ENCODE measurements at regions of chr3 and their contacts with region 1.

Region 1: GRCh38 chr3:105545051-105545450 is 178.3 kb downstream of the ALCAM start:
- DNase-seq: no peak
- ATAC-seq: no peak
- H3K4me3 ChIP-seq: no peak overlapping the region
- H3K27ac ChIP-seq: no peak overlapping the region
- H3K4me1 ChIP-seq: no peaks in the 10 kb centered on the region
- H3K27me3 ChIP-seq: no peaks in the 10 kb centered on the region
- CTCF ChIP-seq: no peak

Region 2: DNA sequence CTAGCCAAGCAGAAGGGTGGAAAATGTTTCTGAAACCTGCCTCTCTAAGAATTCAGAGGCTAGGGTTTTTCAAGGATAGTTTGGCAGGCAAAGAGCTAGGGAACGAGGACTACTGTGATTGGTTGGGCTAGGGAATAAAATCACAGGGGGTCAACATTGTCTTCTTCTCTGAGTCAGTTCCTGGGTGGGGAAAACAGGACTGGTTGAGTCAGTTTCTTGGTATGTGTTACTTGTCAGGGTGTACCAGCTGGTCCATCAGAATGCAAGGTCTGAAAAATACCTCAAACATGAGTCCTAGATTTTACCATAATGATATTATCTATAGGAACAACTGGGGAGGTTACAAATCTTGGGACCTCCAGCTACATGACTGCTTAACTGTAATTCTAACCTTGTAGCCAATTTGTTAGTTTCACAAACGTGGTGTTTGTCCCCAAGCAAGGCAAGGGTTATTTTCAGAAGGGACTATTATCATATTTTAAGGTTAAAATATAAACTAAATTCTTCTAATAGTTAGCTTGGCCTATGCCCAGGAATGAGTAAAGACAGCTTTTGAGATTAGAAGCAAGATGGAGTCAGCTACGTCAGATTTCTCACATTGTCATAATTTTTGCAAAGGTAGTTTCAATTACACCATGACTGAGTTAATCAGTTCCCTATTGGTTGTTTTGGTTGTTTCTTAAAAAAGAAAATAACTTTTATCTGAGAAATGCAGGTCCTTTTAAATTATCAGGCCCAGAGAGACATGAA is 53.2 kb after region 1 on chr3:
- intact Hi-C with region 1: loop called in 1 of 10 experiments (anchors 2 kb)
- DNase-seq: no peak
- ATAC-seq: no peak
- H3K4me3 ChIP-seq: no peak overlapping the region
- H3K27ac ChIP-seq: no peak overlapping the region
- H3K4me1 ChIP-seq: no peaks in the 10 kb centered on the region
- H3K27me3 ChIP-seq: no peaks in the 10 kb centered on the region
- CTCF ChIP-seq: no peak

Region 3: GRCh38 chr3:105626739-105627138 is 81.7 kb after region 1 on chr3:
- intact Hi-C with region 1: no loop called
- DNase-seq: no peak
- ATAC-seq: no peak
- H3K4me3 ChIP-seq: no peak overlapping the region
- H3K27ac ChIP-seq: no peak overlapping the region
- H3K4me1 ChIP-seq: no peaks in the 10 kb centered on the region
- H3K27me3 ChIP-seq: no peaks in the 10 kb centered on the region
- CTCF ChIP-seq: no peak

Measured in heart right ventricle (tissue), 16 donors.